HCT116 (cell line): ENCODE measurements at regions of chr19 and their contacts with region 1.

Region 1: GRCh38 chr19:41872775-41873647 is 4.1 kb upstream of the CD79A start:
- DNase-seq: peak; percentile 63
- ATAC-seq: peak; percentile 83
- H3K4me3 ChIP-seq: no peak overlapping the region
- H3K27ac ChIP-seq: peak overlapping the region; percentile 51
- H3K4me1 ChIP-seq: peaks cover 0 to 27% of the 10 kb centered on the region in 2 experiments; a peak in 2 of 4 replicates
- H3K27me3 ChIP-seq: no peaks in the 10 kb centered on the region
- CTCF ChIP-seq: peak; percentile 86 to 94 (median 88)
- POLR2A ChIP-seq: no peak
- RAD21 ChIP-seq: peak; percentile 89

Region 2: DNA sequence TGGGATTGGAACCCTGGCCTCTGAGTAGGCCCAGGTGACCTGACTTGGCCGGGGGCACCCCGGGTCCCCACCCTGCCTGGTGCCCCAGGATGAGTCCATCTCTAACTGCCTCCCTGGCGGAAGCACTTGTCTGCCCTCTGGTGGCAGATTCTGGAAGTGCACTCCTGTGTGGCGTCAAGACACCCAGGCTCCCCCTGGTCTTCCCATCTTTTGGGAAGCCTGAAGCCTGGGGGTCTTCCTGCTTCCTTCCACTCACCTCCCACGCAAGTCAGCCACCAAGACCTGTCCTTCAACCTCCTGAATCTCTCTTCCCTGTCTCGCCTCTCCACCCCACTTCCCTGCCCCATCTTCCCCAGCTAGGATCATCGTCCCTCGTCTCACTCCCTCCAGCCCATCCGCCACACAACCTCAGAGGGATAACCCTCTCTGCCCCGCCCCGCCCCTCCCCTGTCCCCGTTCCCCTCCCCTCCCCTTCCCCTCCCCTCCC is 78.7 kb after region 1 on chr19:
- CTCF ChIA-PET with region 1: interaction called, 16 read pairs
- POLR2A ChIA-PET with region 1: interaction called, 4 read pairs
- RAD21 ChIA-PET with region 1: interaction called, 3 read pairs
- intact Hi-C with region 1: loop called (anchors 1 kb)
- DNase-seq: peak; percentile 59
- ATAC-seq: peak; percentile 97
- H3K4me3 ChIP-seq: no peak overlapping the region
- H3K27ac ChIP-seq: no peak overlapping the region
- H3K4me1 ChIP-seq: peaks cover 0 to 7% of the 10 kb centered on the region in 2 experiments; a peak in 1 of 4 replicates
- H3K27me3 ChIP-seq: no peaks in the 10 kb centered on the region
- CTCF ChIP-seq: peak; percentile 81 to 99 (median 97)
- POLR2A ChIP-seq: no peak
- RAD21 ChIP-seq: peak; percentile 85